ENCODE measurements at regions of chr19 and their contacts with region 1.

Region 1: DNA sequence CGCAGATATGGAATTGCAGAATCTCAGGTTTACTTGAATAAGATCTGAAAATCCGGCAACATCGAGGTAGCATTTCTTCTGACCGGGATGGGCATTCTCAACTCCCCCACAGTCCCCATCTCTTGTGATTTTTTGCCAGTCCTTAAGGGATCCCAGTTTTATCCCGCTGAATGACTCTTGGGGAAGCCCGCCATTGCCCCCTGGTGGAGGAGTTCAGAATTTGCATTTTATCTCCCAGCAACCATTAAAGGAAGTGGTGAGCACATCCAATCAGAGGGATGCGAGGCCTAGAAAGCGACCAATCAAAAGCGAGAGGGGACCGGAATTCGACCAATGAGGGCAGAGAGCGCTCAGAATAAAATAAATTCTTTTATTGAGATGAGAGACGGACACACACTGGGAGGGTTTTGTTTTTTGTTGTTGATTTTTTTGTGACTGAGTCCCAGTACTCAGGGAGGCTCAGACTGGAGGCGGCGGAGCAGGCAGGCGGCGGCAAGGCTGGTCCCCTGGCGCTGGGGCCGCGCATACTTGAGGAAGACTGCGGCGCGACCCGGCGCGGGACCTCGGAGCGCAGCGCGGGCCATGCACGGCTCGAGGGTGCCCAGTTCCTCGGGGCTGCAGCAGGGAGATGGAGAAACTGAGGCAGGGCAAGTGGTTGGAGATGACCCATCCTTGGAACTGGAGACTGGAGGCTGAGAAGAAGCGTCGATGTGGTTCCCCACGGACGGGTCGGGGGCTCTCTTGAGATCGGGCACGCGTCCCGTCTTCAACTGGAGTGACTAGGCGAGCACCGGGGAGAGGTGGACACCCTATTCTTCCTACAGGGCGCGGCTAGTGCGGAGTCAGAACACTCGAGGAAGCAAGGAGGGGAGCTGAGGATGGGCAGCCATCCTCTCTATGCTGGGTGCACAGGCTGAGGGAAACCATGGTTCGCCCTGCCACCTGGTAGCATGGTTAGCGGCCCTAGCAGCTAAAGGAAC is 4.0 kb upstream of the TTC9B start:
- DNase-seq: peak; percentile 80 to 86
- H3K4me3 ChIP-seq: no peak overlapping the region
- H3K4me1 ChIP-seq: no peaks in the 10 kb centered on the region
- H3K27me3 ChIP-seq: peaks cover 47% of the 10 kb centered on the region

Region 2: DNA sequence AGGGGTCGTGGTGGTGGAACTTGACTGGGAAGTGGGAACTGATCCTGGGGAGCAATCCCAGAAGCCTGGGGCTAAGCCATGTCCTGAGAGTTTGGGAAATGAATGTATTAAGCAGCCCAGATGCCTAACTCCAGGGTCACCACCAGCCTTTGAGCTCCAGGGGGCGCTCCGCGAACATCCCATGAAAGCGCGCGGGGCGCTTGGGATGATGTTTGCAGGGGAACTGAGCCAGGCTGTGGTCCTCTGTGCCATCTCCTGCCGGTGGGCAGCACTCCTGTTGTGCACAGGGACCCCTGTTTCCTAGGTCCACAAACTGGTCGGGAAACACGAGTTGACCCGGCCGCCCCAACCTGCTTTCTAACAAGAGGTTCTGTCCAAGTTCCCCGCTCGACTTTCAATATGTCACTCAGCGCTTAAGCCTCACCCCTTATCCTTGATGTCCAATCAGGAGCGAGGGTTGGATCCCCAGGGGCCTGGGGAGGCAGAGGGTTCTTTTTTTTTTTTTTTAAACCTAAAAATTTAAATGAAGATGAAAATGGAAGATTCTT is 429.1 kb before region 1 on chr19:
- in situ Hi-C with region 1: no loop called
- DNase-seq: peak; percentile 55 to 83
- H3K4me3 ChIP-seq: peak overlapping the region; percentile 29
- H3K4me1 ChIP-seq: no peaks in the 10 kb centered on the region
- H3K27me3 ChIP-seq: peaks cover 20% of the 10 kb centered on the region; the same call in 1 of the 2 replicates

Region 3: DNA sequence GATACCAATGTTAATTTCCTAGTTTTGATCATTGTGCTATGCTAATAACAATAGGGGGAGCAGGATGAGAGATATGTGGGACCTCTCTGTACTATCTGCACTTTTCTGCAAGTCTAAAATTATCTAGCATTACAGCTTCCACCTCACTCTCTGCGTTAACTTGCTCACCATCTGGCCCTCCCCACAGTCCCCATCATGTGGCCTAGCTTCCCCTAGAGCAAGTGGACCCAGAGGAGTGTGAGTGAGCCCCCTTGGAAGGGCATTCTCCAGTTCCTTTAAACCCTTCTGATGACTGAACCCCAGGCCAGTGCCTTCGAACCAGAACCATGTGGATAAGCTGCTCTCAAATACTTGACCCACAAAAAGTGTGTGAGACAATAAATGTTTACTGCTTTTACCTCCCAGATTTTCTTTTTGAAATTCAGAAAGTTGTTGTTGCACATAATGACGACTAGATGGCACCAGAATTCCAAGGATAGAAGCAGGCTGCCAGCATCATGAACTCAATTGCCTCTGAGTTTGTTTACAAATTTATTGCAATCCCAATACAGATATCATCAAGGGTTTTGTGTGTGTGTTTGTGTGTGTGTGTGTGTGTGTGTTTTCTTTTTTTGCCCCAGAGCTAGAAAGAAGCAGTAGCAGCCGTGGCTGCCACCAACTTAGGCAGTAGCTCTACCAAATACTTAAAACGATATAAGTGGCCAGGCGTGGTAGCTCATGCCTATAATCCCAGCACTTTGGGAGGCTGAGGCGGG is 82.4 kb before region 1 on chr19:
- in situ Hi-C with region 1: loop called (anchors 5 kb)
- DNase-seq: peak; percentile 34 to 58
- H3K4me3 ChIP-seq: no peak overlapping the region
- H3K4me1 ChIP-seq: peaks cover 5% of the 10 kb centered on the region
- H3K27me3 ChIP-seq: peaks cover 15% of the 10 kb centered on the region; the same call in 1 of the 2 replicates

Region 4: GRCh38 chr19:40502647-40503319 is 280.6 kb after region 1 on chr19:
- in situ Hi-C with region 1: no loop called
- DNase-seq: no peak
- H3K4me3 ChIP-seq: no peak overlapping the region
- H3K4me1 ChIP-seq: no peaks in the 10 kb centered on the region
- H3K27me3 ChIP-seq: peaks cover 10% of the 10 kb centered on the region

Measured in HAP-1 (cell line).